Left cardiac atrium (tissue), 4 donors: ENCODE measurements at regions of chr19 and their contacts with region 1.

Region 1: DNA sequence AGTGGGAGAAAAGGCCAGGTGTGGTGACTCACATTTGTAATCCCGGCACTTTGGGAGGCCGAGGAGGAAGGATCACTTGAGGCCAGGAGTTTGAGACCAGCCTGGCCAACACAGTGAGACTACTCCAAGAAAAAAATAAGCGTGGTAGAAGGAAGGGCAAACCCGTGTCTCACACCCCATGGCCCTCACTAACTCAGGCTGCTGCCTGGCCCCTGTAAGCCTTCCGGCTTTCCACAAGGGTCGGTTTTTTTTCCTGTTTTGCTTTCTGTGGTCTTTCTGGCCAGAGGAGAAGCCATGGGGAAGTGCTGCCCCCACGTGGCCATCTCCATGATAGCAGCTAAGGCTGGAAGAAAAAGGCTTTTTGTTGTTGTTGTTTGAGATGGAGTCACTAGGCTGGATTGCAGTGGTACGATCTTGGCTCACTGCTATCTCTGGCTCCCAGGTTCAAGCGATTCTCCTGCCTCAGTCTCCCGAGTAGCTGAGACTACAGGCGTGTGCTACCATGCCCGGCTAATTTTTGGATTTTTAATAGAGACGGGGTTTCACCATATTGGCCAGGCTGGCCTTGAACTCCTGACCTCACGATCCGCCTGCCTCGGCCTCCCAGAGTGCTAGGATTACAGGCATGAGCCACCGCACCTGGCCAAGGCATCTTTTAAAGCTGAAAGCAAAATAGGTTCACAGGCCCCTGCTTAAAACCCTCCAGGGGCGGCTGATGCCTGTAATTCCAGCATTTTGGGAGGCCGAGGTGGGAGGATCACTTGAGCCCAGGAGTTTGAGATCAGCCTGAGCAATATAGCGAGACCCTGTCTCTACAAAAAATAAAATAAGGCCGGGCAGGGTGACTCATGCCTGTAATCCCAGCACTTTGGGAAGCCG is 7.5 kb upstream of the ARHGEF18 start:
- DNase-seq: peak; percentile 78
- ATAC-seq: peak; percentile 61 to 73

Region 2: DNA sequence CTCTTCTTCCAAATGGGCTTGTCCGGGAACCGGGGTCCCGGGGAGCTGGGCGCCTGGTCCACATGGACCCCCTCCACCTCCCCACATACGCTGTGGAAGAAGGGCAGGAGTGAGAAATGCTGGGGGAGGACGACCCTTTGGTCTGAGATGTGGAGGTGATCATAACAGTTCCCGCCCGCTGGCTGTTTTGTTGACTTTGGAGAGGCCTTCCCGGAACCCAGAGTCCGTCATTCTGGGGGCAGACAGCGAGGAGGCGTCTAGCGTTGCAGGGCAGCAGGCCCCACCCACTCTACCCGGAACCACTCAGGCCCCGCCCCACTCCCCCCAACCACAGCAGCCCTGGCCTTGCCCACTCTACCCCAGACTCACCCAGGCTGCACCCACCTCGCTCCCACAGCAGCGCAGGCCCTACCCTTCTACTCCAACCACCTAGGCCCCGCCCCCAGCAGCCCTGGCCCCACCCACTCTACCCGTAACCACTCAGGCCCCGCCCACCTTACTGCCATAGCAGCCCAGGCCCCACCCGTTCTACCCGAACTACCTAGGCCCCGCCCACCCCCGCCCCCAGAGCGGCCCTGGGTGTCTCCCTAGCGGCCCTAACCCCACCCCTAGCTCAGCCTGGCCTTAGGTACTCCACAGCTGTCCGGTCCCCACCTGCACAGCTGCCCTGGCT is 610.9 kb before region 1 on chr19:
- intact Hi-C with region 1: no loop called
- DNase-seq: peak; percentile 83
- ATAC-seq: peak; percentile 66 to 94

Region 3: GRCh38 chr19:7104747-7105447 is 236.3 kb before region 1 on chr19:
- intact Hi-C with region 1: loop called in 1 of 2 experiments (anchors 2 kb)
- DNase-seq: no peak
- ATAC-seq: peak in 1 of 2 donors; percentile 21

Region 4: DNA sequence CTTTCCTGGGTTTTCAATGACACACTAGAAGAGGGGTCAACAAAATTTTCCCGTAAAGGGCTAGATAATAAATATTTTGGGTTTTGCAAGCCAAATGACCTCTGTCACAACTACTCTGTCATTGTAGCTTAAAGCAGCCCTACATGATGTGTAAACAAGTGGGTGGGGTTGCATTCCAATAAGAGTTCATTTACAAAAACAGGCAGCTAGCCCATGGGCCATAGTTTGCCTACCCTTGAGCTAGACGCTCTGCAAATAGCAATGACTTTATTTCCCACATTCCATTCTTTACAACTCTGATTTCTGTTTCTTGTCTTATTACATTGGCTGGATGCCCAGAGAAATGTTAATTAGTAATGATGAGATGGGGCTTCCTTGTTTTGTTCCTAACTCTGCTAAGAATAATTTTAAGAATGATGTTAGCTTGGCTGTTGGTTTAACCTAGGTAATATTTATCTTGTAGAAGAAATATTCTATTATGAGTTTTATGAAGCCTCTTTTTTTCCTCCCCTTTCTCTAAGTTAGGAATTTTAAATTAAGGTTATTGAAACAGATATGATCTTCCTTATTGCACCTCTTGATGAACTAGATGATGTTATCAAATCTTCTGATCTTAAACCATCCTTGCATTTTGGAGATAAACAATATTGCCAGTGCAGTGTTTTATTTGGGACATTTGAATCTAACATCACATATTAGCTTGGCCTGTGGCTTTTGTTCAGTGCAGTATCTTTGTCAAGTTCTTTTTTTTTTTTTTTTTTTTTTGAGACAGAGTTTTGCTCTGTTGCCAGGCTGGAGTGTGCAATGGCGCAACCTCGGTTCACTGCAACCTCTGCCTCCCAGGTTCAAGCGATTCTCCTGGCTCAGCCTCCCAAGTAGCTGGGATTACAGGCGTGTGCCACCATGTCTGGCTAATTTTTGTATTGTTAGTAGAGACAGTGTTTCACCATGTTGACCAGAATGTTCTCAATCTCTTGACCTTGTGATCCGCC is 195.4 kb before region 1 on chr19:
- intact Hi-C with region 1: loop called (anchors 2 to 5 kb)
- DNase-seq: no peak
- ATAC-seq: no peak

Region 5: GRCh38 chr19:7224209-7224686 is 117.0 kb before region 1 on chr19:
- intact Hi-C with region 1: no loop called
- DNase-seq: no peak
- ATAC-seq: peak; percentile 64 to 83

Region 6: GRCh38 chr19:7471696-7472615 is 130.8 kb after region 1 on chr19:
- intact Hi-C with region 1: no loop called
- DNase-seq: no peak
- ATAC-seq: no peak